Sciatic nerve (tissue), 2 donors: ENCODE measurements at regions of chr2 and their contacts with region 1.

Region 1: DNA sequence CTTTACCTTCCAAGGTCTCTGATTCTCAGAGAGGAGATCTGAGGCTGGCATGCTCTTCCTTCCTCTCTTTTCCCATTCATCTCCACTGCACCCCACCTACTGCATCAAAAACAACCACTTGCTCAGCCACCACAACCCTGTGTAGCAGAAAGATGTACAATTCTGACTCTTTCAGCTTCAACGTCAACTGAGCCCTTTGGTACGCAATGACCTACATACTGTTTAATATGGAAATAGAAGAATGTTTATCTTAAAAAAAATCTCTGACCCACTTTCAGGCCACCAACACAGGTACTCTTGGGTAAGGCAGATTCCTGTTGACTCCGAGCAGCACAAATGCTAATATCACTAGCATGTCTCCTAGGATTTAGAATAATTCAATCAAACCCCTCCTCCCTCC is 76.2 kb upstream of the AFF3 start:
- DNase-seq: no peak
- ATAC-seq: no peak

Region 2: GRCh38 chr2:101974663-101975062 is 1756.1 kb after region 1 on chr2:
- intact Hi-C with region 1: loop called (anchors 5 kb)
- DNase-seq: no peak
- ATAC-seq: peak; percentile 31